Activated T-helper 1 cell treated with anti-CD3 and anti-CD28 coated beads, Interleukin-12 subunit alpha, Interleukin-12 subunit beta, Interleukin-2, Interleukin-4 antibody, amounts not matched to agents 30 ng/mL and 10 ng/mL and 1 ng/mL, durations not matched to agents 14 hours and 24 hours and 36 hours (primary cell): ENCODE measurements at regions of chr15 and their contacts with region 1.

Region 1: GRCh38 chr15:81323944-81324881 is at the start of gene STARD5:
- DNase-seq: peak; percentile 98
- H3K4me3 Mint-ChIP-seq: peak within 1 kb of the TSS; percentile 98
- H3K27ac Mint-ChIP-seq: peak within 1 kb of the TSS; percentile 76
- H3K4me1 Mint-ChIP-seq: peaks cover 38% of the 10 kb centered on the region
- H3K27me3 Mint-ChIP-seq: no peaks in the 10 kb centered on the region
- total RNA-seq, gene STARD5: 4.5 and 4.6 TPM in 2 replicates

Region 2: DNA sequence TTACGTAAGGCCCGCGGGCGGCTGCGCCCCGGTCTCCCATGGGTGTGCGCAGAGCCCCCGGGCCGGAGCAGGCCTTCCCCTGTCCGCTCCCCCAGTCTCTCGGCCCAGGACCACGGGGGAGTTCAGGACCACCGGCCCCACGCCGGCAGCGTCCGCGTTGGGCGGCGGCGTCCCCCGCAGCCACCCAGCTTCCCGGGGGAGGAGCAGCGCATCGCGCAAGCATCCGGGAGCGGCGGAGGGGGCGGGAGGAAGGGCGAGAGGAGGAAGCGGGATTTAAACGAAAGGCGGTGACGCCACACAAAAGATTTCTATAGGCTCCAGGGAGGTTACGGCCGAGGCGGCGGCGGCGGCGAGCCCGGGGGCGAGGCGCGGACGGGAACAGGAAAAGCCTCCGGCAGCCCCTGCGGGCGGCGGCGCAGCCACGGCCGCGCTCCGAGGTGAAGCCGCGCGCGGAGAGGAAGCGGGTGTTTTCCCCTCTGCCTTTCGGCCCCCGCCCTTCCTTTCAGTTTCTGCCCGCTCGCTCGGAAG is 323.5 kb before region 1 on chr15 and contains the start of gene TLNRD1:
- intact Hi-C with region 1: loop called (anchors 1 kb)
- DNase-seq: peak; percentile 89
- H3K4me3 Mint-ChIP-seq: peak within 1 kb of the TSS; percentile 97
- H3K27ac Mint-ChIP-seq: peak within 1 kb of the TSS; percentile 98
- H3K4me1 Mint-ChIP-seq: peaks cover 62% of the 10 kb centered on the region
- H3K27me3 Mint-ChIP-seq: peaks cover 2% of the 10 kb centered on the region
- total RNA-seq, gene TLNRD1: 30.2 and 30.8 TPM in 2 replicates

Region 3: DNA sequence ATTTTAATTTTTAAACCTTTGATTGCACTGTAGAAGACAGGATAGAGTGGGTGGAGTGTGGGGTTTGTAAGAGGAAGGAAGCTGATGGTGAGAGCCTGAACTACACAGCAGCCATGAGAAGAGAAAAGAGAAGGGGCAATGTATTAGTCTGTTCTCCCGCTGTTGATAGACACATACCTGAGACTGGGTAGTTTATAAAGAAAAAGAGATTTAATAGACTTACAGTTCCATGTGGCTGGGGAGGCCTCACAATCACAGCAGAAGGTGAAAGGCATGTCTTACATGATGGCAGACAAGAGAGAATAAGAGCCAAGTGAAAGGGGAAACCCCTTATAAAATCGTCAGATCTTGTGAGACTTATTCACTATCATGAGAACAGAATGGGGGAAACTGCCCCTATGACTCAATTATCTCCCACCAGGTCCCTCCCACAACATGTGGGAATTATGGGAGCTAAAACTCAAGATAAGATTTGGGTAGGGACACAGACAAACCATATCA is 37.5 kb before region 1 on chr15:
- intact Hi-C with region 1: no loop called
- DNase-seq: no peak
- H3K4me3 Mint-ChIP-seq: peak overlapping the region; percentile 34
- H3K27ac Mint-ChIP-seq: peak overlapping the region; percentile 64
- H3K4me1 Mint-ChIP-seq: peaks cover 46% of the 10 kb centered on the region
- H3K27me3 Mint-ChIP-seq: no peaks in the 10 kb centered on the region

Region 4: DNA sequence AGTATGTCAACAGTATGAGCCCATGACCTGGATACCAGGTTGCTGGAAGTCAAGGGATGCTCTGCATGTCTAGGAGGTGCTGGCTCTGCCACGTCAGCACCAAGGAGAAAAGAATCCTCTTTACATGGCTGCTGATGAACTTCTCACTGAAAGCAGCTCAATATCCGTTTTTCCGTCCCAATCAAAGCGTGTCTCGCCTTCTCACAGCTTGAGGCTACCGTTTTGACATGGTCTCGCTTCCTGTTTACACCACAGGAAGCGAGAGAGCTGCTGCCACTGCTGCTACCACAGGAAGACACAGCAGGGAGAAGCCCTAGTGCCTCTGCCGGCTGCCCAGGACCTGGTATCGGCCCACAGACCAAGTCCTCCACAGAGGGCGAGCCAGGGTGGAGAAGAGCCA is 27.5 kb before region 1 on chr15:
- intact Hi-C with region 1: loop called (anchors 1 kb)
- DNase-seq: peak; percentile 77
- H3K4me3 Mint-ChIP-seq: peak overlapping the region; percentile 97
- H3K27ac Mint-ChIP-seq: peak overlapping the region; percentile 94
- H3K4me1 Mint-ChIP-seq: peaks cover 95% of the 10 kb centered on the region
- H3K27me3 Mint-ChIP-seq: no peaks in the 10 kb centered on the region

Region 5: GRCh38 chr15:81351651-81352050 is 27.4 kb after region 1 on chr15:
- intact Hi-C with region 1: no loop called
- DNase-seq: no peak
- H3K4me3 Mint-ChIP-seq: no peak overlapping the region
- H3K27ac Mint-ChIP-seq: no peak overlapping the region
- H3K4me1 Mint-ChIP-seq: no peaks in the 10 kb centered on the region
- H3K27me3 Mint-ChIP-seq: peaks cover 2% of the 10 kb centered on the region

Region 6: DNA sequence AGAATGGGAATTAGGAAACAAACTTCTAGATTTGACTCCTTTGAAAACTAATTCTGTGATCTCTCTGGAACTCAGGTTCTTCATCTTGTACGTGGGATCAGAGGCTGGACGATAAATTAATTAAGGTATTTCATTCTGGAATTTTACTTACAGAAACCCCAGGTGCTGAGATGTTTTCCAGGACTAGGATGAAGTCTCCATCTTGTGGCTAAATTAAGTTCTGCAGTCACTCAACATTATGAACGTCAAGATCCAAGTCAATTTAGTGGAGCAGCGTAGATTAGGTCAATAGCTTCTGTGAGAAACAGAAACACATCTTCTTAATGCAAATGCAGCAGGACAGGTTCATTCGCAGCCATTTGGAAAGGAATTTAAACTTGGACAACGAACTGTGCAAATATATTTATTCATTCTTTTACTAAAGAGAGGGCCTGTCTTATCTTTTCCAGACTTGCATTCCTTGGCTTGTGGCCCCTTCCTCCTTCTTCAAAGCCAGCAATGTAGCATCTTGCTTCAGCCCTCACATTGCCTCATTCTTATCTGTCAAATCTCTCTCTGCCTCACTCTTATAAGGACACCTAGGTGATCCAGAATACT is 76.5 kb after region 1 on chr15:
- intact Hi-C with region 1: loop called (anchors 10 kb)
- DNase-seq: no peak
- H3K4me3 Mint-ChIP-seq: no peak overlapping the region
- H3K27ac Mint-ChIP-seq: no peak overlapping the region
- H3K4me1 Mint-ChIP-seq: no peaks in the 10 kb centered on the region
- H3K27me3 Mint-ChIP-seq: peaks cover 5% of the 10 kb centered on the region